ENCODE measurements at regions of chr12 and their contacts with region 1.

Region 1: DNA sequence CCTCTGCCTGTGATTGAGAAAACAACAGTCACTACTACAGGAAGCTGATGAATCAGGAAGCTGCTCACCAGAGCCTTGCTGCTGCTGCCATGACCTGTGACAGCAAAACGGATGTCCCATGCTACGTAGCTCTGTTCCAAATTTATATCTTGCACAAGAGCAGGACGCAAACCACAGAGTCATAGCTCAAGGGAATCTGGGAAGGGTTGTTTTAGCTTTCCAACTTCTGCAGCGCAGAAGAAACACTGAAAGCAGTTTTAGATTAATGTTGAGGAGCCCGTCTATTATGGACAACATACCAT is 1.9 kb upstream of the ANKRD33 start:
- DNase-seq: peak; percentile 72
- H3K4me3 Mint-ChIP-seq: no peak overlapping the region
- H3K27ac Mint-ChIP-seq: peak overlapping the region; percentile 94
- H3K4me1 Mint-ChIP-seq: peaks cover 25% of the 10 kb centered on the region
- H3K27me3 Mint-ChIP-seq: peaks cover 11% of the 10 kb centered on the region

Region 2: GRCh38 chr12:51871126-51871525 is 14.8 kb before region 1 on chr12:
- CTCF ChIA-PET with region 1: interaction called, 18 read pairs
- DNase-seq: no peak
- H3K4me3 Mint-ChIP-seq: no peak overlapping the region
- H3K27ac Mint-ChIP-seq: no peak overlapping the region
- H3K4me1 Mint-ChIP-seq: peaks cover 7% of the 10 kb centered on the region
- H3K27me3 Mint-ChIP-seq: peaks cover 75% of the 10 kb centered on the region

Region 3: DNA sequence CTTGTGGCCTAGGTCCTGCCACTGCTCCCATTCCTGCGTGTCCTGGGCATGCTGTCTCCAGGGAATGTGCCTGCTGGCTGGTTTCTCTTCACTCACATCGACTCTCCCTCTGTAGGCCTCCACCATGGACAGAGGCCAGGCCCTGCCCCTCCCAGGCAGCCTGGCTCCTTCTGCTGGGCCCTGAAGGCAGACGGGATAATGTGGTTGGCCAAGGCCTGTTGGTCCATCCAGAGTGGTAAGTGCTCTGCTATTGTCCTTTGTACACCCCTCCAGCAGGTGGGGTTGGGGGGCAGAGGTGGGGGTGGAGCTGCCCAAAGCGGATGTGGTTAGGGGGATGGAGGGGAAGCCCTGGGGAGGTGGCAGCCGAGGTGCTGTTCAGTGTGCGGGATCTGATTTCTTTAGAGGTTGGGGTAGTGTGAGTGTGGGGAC is 155.7 kb after region 1 on chr12:
- CTCF ChIA-PET with region 1: no interaction called
- DNase-seq: peak; percentile 62
- H3K4me3 Mint-ChIP-seq: no peak overlapping the region
- H3K27ac Mint-ChIP-seq: peak overlapping the region; percentile 50
- H3K4me1 Mint-ChIP-seq: peaks cover 50% of the 10 kb centered on the region
- H3K27me3 Mint-ChIP-seq: peaks cover 37% of the 10 kb centered on the region